ENCODE measurements at regions of chr15 and their contacts with region 1.

Region 1: DNA sequence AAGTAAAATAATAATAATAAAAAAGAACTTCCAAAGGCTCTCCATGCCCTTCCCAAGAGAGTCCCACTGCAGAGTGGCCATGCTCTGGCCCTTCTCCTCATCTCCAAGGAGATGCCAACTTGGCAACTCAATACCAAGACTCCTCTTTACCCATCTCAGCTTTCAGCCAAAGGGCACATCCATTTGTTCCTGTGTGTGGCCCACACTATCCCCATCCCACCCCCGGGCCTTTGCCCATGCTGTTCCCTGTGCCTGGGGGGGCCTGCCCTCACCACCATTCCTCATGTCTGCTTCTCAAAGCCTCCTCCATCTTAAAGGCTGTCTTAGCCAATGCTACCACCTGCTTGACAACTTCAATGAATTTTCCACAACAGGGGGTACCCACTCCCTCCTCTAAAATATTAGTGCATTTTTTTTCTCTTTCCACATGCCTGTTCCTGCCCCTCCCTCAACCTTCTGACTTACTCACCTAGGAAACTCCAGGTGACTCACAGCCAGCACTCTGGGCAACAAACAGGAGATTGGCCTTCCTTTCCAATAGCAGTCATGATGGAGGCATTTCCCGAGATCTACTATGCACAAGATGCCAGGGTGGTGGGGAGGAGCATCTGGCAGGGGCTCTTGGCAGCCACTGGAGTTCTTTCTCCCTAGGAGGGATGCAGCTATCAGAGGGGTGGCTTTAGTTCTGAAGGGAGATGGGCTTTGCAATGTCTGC is 109.4 kb upstream of the SMAD3 start:
- DNase-seq: no peak
- ATAC-seq: no peak
- H3K4me3 ChIP-seq: no peak overlapping the region
- H3K27ac ChIP-seq: no peak overlapping the region
- H3K4me1 ChIP-seq: no peaks in the 10 kb centered on the region
- H3K27me3 ChIP-seq: no peaks in the 10 kb centered on the region

Region 2: GRCh38 chr15:67003586-67003985 is 47.6 kb after region 1 on chr15:
- intact Hi-C with region 1: loop called in 1 of 4 experiments (anchors 10 kb)
- DNase-seq: no peak
- ATAC-seq: no peak
- H3K4me3 ChIP-seq: no peak overlapping the region
- H3K27ac ChIP-seq: no peak overlapping the region
- H3K4me1 ChIP-seq: no peaks in the 10 kb centered on the region
- H3K27me3 ChIP-seq: no peaks in the 10 kb centered on the region

Region 3: GRCh38 chr15:67013696-67014095 is 57.7 kb after region 1 on chr15:
- intact Hi-C with region 1: loop called in 2 of 4 experiments (anchors 10 kb)
- DNase-seq: peak; percentile 38 to 74 (median 64)
- ATAC-seq: peak; percentile 74 to 84
- H3K4me3 ChIP-seq: no peak overlapping the region
- H3K27ac ChIP-seq: peak overlapping the region; percentile 14
- H3K4me1 ChIP-seq: no peaks in the 10 kb centered on the region
- H3K27me3 ChIP-seq: no peaks in the 10 kb centered on the region

Region 4: GRCh38 chr15:67033571-67034044 is 77.6 kb after region 1 on chr15:
- intact Hi-C with region 1: no loop called
- DNase-seq: peak in 2 of 3 donors; percentile 75 to 76
- ATAC-seq: peak; percentile 56
- H3K4me3 ChIP-seq: peak overlapping the region; percentile 16
- H3K27ac ChIP-seq: no peak overlapping the region
- H3K4me1 ChIP-seq: peaks cover 6% of the 10 kb centered on the region
- H3K27me3 ChIP-seq: no peaks in the 10 kb centered on the region

Region 5: DNA sequence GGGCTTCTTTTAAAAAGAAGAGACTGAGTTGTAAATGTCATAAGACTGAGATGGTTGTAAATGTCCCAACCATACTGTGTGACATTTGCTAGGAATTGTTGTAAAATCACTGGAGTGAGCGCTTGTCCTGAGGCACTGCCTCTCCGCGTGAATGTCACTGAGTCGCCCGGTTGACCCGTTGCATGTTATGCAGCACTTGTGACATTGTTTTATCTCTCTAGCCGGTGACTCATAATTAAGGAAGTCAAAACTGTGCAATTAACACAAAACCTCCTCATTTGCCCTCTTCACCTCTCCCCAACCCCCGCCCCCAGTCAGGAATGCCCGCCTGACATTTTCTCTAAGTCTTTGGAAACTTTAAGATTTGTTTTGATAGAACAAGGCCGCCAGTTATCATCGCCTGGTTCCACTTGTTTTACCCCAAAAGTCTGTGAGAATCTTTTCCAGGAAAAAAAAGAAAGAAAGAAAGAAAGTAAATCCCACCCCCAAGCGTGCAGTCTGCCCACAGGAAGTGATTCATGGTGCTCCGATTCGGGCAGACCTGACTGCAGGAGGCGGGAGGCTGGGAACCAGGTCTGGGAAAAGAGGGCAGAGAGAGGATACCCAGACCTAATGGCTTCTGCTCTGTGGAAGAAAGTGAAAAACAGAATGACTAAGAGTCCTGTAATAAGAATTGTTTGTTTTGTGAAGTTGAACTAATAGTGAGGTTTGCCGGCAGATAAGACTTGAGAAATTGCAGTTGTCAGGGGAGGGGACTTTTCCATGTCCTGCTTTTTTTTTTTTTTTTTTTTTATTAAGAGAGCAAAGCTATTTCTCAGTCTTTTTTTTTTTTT is 194.2 kb after region 1 on chr15:
- intact Hi-C with region 1: no loop called
- DNase-seq: peak; percentile 85 to 86 (median 86)
- ATAC-seq: peak; percentile 85 to 91
- H3K4me3 ChIP-seq: no peak overlapping the region
- H3K27ac ChIP-seq: peak overlapping the region; percentile 72
- H3K4me1 ChIP-seq: peaks cover 31% of the 10 kb centered on the region
- H3K27me3 ChIP-seq: no peaks in the 10 kb centered on the region

Region 6: GRCh38 chr15:67303490-67304363 is 347.7 kb after region 1 on chr15:
- intact Hi-C with region 1: loop called in 1 of 4 experiments (anchors 5 kb)
- DNase-seq: no peak
- ATAC-seq: peak in 1 of 2 donors; percentile 44
- H3K4me3 ChIP-seq: no peak overlapping the region
- H3K27ac ChIP-seq: no peak overlapping the region
- H3K4me1 ChIP-seq: peaks cover 2% of the 10 kb centered on the region
- H3K27me3 ChIP-seq: no peaks in the 10 kb centered on the region